ENCODE measurements at regions of chr20 and their contacts with region 1.

Region 1: DNA sequence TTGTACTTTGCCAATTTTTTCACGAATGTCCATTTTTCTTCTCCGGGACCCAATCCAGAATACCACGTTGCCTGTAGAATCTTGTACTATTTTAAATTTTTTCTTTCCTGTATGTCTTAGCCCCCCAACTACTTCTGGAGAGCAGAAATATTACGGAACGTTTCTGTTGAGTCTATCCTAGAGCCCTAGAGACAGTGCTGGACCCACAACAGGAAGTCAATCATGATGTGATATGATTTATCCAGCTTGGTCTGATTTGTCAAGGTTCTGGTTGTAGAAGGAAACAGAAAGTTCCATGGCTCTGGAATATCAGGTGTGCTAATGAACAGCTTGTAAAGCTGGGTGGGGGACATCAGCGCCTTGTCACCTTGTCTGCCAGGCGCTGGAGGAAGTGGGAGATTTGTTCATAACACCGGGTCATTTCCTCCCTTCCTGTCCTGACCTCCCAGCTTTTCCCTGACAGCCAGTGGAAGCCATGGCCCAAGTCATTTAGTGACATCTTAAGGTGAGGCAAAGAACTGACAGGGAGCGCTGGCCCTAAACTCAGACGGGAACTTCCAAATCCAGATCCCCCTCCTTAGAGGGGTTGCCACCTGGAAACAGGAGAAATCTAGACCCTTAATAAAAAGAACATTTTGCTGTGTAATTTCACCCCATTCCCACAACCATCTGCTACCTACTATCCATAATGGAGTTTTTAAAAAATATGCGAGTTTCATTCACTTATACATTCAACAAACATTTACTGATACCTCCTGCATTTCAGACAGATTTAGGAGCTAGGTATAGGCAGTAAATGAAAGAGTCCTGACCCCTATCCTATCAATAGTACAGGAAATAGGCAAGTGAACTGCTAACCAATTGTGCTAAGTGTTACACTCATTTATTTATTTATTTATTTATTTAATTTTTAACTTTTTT is 130.5 kb downstream of the ZFP64 start:
- DNase-seq: peak; percentile 84
- ATAC-seq: peak; percentile 72
- H3K4me3 ChIP-seq: no peak overlapping the region
- H3K27ac ChIP-seq: no peak overlapping the region
- H3K4me1 ChIP-seq: peaks cover 9% of the 10 kb centered on the region
- H3K27me3 ChIP-seq: no peaks in the 10 kb centered on the region
- CTCF ChIP-seq: peak; percentile 96

Region 2: GRCh38 chr20:51703400-51704287 is 357.4 kb before region 1 on chr20:
- CTCF ChIA-PET with region 1: interaction called, 8 read pairs
- POLR2A ChIA-PET with region 1: no interaction called
- intact Hi-C with region 1: loop called (anchors 5 kb)
- DNase-seq: no peak
- ATAC-seq: no peak; the same call in 1 of the 2 replicates
- H3K4me3 ChIP-seq: no peak overlapping the region
- H3K27ac ChIP-seq: no peak overlapping the region
- H3K4me1 ChIP-seq: peaks cover 8% of the 10 kb centered on the region
- H3K27me3 ChIP-seq: no peaks in the 10 kb centered on the region
- CTCF ChIP-seq: no peak

Region 3: GRCh38 chr20:51800060-51800794 is 260.8 kb before region 1 on chr20:
- CTCF ChIA-PET with region 1: interaction called, 8 read pairs
- POLR2A ChIA-PET with region 1: no interaction called
- intact Hi-C with region 1: loop called (anchors 1 kb)
- DNase-seq: peak; percentile 92
- ATAC-seq: peak; percentile 89
- H3K4me3 ChIP-seq: peak overlapping the region; percentile 73
- H3K27ac ChIP-seq: no peak overlapping the region
- H3K4me1 ChIP-seq: peaks cover 33% of the 10 kb centered on the region
- H3K27me3 ChIP-seq: no peaks in the 10 kb centered on the region
- CTCF ChIP-seq: peak; percentile 100

Region 4: GRCh38 chr20:51984931-51985415 is 76.1 kb before region 1 on chr20:
- CTCF ChIA-PET with region 1: interaction called, 8 read pairs
- POLR2A ChIA-PET with region 1: no interaction called
- intact Hi-C with region 1: loop called (anchors 1 kb)
- DNase-seq: peak; percentile 99
- ATAC-seq: peak; percentile 95
- H3K4me3 ChIP-seq: no peak overlapping the region
- H3K27ac ChIP-seq: peak overlapping the region; percentile 36
- H3K4me1 ChIP-seq: peaks cover 13% of the 10 kb centered on the region
- H3K27me3 ChIP-seq: no peaks in the 10 kb centered on the region
- CTCF ChIP-seq: no peak

Region 5: DNA sequence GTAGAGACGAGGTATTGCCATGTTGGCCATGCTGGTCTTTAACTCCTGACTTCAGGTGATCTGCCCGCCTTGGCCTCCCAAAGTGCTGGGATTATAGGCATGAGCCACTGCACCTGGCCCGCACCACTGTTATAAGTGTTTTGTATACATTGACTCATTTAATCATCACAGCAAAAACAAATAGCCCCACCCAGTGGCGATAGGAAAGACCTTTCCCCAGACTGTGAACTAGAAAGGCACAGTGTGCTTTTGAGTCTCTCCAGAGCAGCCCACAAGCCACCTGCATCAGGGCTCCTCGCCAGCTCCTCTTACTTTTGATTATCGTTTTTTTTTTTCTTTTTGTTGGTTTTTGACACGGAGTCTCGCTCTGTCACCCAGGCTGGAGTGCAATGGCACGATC is 158.4 kb after region 1 on chr20:
- CTCF ChIA-PET with region 1: no interaction called
- POLR2A ChIA-PET with region 1: no interaction called
- intact Hi-C with region 1: no loop called
- DNase-seq: peak; percentile 91
- ATAC-seq: peak; percentile 97
- H3K4me3 ChIP-seq: no peak overlapping the region
- H3K27ac ChIP-seq: no peak overlapping the region
- H3K4me1 ChIP-seq: peaks cover 4% of the 10 kb centered on the region
- H3K27me3 ChIP-seq: peaks cover 16% of the 10 kb centered on the region
- CTCF ChIP-seq: peak; percentile 63

Region 6: GRCh38 chr20:52473186-52473585 is 412.1 kb after region 1 on chr20:
- CTCF ChIA-PET with region 1: no interaction called
- POLR2A ChIA-PET with region 1: no interaction called
- intact Hi-C with region 1: no loop called
- DNase-seq: no peak
- ATAC-seq: no peak
- H3K4me3 ChIP-seq: no peak overlapping the region
- H3K27ac ChIP-seq: no peak overlapping the region
- H3K4me1 ChIP-seq: no peaks in the 10 kb centered on the region
- H3K27me3 ChIP-seq: peaks cover 9% of the 10 kb centered on the region; the same call in 1 of the 2 replicates
- CTCF ChIP-seq: no peak